Aorta (tissue), 5 donors: ENCODE measurements at regions of chr20 and their contacts with region 1.

Region 1: GRCh38 chr20:46757754-46758678 is 48.6 kb downstream of the SLC2A10 start:
- DNase-seq: peak in 1 of 2 donors; percentile 85
- ATAC-seq: peak; percentile 81
- H3K4me3 ChIP-seq: no peak overlapping the region
- H3K27ac ChIP-seq: no peak overlapping the region
- H3K4me1 ChIP-seq: no peaks in the 10 kb centered on the region
- H3K27me3 ChIP-seq: no peaks in the 10 kb centered on the region

Region 2: GRCh38 chr20:46787991-46788762 is 30.2 kb after region 1 on chr20:
- intact Hi-C with region 1: no loop called
- DNase-seq: no peak
- ATAC-seq: no peak
- H3K4me3 ChIP-seq: no peak overlapping the region
- H3K27ac ChIP-seq: no peak overlapping the region
- H3K4me1 ChIP-seq: no peaks in the 10 kb centered on the region
- H3K27me3 ChIP-seq: no peaks in the 10 kb centered on the region

Region 3: DNA sequence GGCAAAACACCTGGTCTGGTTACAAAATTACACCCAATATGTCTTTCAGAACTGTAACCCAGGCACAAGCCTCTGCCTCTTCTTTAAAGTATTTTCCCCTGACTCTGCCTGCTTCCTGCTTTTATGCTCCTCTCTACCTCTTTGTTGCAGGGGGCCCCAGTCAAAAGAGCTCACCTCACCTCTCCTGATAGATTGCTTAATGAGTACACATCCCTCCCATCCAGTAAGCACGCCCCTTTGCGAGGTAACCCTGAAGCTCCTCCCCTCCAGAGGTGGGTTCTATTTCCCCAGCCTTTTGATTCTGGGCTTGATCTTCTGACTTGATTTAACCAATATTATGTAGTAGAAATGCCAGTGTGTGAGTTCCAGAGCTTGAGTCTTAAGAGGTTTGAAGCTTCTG is 80.0 kb after region 1 on chr20:
- intact Hi-C with region 1: no loop called
- DNase-seq: no peak
- ATAC-seq: no peak
- H3K4me3 ChIP-seq: no peak overlapping the region
- H3K27ac ChIP-seq: no peak overlapping the region
- H3K4me1 ChIP-seq: no peaks in the 10 kb centered on the region
- H3K27me3 ChIP-seq: no peaks in the 10 kb centered on the region

Region 4: DNA sequence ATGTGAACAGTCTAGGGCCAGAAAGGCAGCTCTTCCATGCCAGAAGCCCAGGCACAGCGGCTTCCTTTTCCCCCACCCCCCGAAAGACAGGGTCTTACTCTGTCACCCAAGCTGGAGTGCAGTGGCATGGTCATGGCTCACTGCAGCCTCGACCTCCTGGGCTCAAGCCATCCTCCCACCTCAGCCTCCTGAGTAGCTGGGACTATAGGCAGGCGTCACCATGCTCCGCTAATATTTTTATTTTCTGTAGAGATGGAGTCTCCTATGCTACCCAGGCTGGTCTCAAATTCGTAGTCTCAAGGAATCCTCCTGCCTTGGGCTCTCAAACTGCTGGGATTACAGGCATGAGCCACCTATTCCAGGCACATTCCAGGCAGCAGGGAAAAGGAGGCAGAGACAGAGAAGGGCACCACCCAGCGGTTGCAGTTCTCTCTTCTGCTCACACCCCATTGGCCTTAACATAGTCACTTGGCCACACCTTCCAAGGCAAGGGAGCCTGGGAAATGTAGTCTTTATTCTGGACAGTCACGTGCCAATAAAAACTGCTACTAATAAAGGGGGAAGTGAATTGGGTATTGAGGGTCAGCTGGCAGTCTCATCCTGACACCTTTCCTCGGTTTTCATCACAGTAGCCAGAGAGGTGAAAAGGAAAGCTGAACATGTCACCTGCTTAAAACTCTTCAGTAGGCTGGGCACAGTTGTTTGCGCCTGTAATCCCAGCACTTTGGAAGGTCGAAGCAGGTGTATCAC is 392.6 kb after region 1 on chr20:
- intact Hi-C with region 1: loop called (anchors 2 kb)
- DNase-seq: peak; percentile 78 to 88
- ATAC-seq: peak; percentile 85
- H3K4me3 ChIP-seq: no peak overlapping the region
- H3K27ac ChIP-seq: no peak overlapping the region
- H3K4me1 ChIP-seq: no peaks in the 10 kb centered on the region
- H3K27me3 ChIP-seq: no peaks in the 10 kb centered on the region

Region 5: DNA sequence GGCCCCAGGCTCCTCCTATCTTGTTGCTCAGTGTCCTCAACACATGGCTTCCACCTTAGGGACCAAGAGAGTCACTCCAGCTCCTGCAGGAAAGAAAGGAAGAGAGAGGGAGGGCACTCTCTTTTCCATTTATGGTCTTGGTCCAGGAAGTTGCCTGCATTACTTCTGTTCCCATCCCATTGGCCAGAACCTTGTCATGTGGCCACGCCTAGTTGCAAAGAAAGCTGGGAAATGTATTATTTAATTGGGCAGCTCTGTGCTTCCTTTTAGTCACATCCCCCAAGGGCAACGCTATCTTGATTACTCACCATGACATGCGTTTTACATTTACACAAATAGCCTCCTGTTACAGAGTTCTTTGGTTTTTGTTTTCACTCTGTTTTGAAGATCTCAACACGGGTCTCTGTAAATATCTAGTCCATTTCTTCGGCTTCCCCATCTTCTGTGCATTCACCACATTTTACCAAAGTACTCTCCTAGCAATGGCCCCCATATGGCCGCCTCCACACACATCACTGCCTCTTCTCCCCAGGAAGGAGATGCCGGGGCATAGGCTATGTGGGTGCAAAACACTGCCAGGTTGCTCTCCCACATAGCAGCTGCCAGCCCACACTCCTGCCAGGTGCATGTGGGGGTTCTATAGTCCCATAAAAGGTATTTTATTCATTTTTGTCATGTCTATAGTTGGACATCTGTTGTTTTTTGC is 634.2 kb after region 1 on chr20:
- intact Hi-C with region 1: loop called in 1 of 2 experiments (anchors 10 kb)
- DNase-seq: no peak
- ATAC-seq: peak; percentile 15
- H3K4me3 ChIP-seq: no peak overlapping the region
- H3K27ac ChIP-seq: no peak overlapping the region
- H3K4me1 ChIP-seq: no peaks in the 10 kb centered on the region
- H3K27me3 ChIP-seq: no peaks in the 10 kb centered on the region

Region 6: GRCh38 chr20:47610247-47610944 is 852.4 kb after region 1 on chr20:
- intact Hi-C with region 1: loop called in 1 of 2 experiments (anchors 10 kb)
- DNase-seq: peak in 1 of 2 donors; percentile 74
- ATAC-seq: peak; percentile 83
- H3K4me3 ChIP-seq: no peak overlapping the region
- H3K27ac ChIP-seq: peak overlapping the region in 1 of 2 donors; percentile 11
- H3K4me1 ChIP-seq: peaks cover 0 to 1% of the 10 kb centered on the region in 2 donors
- H3K27me3 ChIP-seq: no peaks in the 10 kb centered on the region